PC-9 (cell line): ENCODE measurements at regions of chr4 and their contacts with region 1.

Region 1: DNA sequence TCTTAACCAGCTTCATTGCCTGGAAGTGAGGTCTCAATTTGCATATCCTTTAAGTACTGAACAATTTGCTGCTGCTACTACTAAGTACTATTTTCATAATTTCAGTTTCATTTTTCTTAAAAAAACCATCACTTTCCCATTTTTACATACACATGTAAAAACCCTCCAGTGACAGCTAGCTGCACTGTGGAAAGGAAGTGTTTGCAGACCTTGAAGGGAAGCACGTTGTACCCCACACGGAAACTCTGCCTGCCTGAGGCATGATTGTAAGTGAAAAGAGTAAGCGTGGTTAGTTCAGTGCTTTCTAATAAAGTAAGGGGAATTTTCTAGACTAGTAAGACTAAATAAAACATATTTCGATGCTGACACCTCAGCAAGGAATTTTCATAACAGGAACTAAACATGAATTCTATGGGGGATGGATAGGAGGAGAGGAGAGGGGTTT is 103.6 kb downstream of the RAPGEF2 start:
- DNase-seq: no peak
- H3K4me3 ChIP-seq: no peak overlapping the region
- H3K27ac ChIP-seq: no peak overlapping the region
- H3K4me1 ChIP-seq: no peaks in the 10 kb centered on the region
- H3K27me3 ChIP-seq: no peaks in the 10 kb centered on the region
- CTCF ChIP-seq: no peak

Region 2: DNA sequence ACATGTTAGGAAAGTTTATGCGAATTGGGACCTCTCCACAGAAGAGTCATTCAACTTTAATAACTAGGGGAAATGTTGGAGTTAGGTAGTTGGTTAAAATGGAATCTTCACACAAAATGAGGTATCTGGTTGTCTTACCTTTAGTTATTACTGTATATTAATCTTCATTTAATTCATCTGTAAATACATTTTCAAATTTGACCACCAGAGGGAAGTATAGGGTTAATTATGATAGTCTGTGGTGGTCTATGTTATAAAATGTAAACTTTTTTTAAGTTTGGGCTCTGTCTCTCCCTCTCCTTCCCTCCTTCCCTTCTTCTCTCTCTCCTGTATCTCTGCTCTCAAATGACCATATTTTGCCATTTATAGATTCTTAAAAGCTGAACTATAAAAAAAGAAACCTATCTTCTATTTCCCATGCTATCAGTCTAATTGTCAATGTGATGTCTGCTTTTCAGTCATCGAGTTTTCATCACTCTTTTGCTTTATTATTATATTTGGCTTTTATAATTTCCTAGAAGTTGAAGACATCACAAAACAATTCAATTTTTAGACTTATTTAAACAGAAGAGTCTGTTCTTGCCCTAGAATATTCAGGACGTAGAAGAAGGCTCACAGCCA is 946.4 kb before region 1 on chr4:
- CTCF ChIA-PET with region 1: no interaction called
- POLR2A ChIA-PET with region 1: no interaction called
- intact Hi-C with region 1: loop called (anchors 1 kb)
- DNase-seq: no peak
- H3K4me3 ChIP-seq: no peak overlapping the region
- H3K27ac ChIP-seq: no peak overlapping the region
- H3K4me1 ChIP-seq: no peaks in the 10 kb centered on the region
- H3K27me3 ChIP-seq: no peaks in the 10 kb centered on the region
- CTCF ChIP-seq: peak; percentile 70

Region 3: GRCh38 chr4:158410272-158410671 is 796.2 kb before region 1 on chr4:
- CTCF ChIA-PET with region 1: no interaction called
- POLR2A ChIA-PET with region 1: no interaction called
- intact Hi-C with region 1: loop called (anchors 10 kb)
- DNase-seq: no peak
- H3K4me3 ChIP-seq: no peak overlapping the region
- H3K27ac ChIP-seq: no peak overlapping the region
- H3K4me1 ChIP-seq: no peaks in the 10 kb centered on the region
- H3K27me3 ChIP-seq: no peaks in the 10 kb centered on the region
- CTCF ChIP-seq: 0 out of 2 replicates have a peak, but pooled peaks have one; percentile 22

Region 4: DNA sequence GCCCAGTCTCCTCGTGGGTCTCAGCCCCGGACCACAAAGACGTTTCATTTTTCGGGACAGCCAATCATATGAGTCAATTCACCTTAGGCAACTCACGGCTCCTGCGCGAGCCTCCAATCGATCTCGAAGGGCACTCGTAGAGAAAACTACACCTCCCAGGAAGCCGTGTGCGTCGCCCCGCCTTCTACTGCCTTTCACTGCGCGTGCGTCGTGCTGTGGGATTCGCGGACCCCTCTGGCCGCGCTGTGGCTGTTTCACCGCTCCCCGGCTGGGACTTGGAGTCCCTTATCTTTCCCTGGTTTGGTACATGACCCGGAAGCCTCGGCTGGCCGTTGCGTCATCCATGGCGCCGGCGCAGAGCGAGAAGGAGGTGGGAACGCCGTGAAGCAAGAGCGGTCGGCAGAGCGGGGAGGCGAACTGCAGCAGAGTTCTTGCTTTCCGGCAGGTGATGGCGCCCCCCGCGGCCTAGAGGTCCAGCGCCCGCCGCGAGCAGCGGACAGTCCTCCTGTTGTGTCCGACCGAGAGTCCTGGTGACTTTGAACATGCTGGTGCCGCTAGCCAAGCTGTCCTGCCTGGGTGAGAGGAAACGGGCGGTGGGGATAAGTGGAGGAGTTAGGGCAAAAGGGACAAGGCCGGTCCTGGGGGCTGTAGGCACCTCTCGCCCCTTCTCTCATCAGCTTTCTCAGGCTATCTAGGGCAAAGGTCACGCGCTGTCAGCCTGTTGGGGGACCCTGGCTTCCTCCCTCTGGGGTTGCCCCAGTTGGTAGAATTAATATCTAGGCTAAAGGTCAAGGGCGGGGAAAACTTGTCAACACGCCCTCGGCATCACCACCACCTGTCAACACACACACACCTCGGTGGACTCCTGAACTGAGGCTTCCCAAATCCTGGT is 534.3 kb before region 1 on chr4 and contains the start of gene ETFDH:
- CTCF ChIA-PET with region 1: no interaction called
- POLR2A ChIA-PET with region 1: no interaction called
- intact Hi-C with region 1: loop called (anchors 1 kb)
- DNase-seq: peak; percentile 95 to 98
- H3K4me3 ChIP-seq: peak within 1 kb of the TSS; percentile 83
- H3K27ac ChIP-seq: peak within 1 kb of the TSS; percentile 74
- H3K4me1 ChIP-seq: peaks cover 8% of the 10 kb centered on the region
- H3K27me3 ChIP-seq: no peaks in the 10 kb centered on the region
- CTCF ChIP-seq: peak; percentile 63
- total RNA-seq, gene ETFDH: 16.9 and 21.0 TPM in 2 replicates

Region 5: DNA sequence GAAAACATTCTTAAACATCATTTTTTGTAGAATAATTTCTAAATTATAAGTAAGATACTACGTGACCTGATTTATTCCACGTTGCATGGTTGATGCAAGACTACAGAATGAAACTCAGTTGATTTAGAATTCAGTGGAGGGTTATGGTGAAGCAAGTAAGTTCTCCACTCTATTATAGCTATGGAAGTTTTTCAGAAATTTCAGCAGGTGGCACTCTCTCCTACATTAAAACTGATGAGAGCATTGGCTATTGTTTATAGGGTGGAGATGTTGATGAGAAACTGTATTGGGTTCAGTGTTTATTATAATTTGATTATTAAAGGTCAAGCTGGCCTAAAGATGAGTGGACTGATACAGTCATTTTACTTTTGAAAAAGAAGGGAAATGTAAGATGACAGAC is 349.6 kb before region 1 on chr4:
- CTCF ChIA-PET with region 1: interaction called, 3 read pairs
- POLR2A ChIA-PET with region 1: interaction called, 5 read pairs
- intact Hi-C with region 1: loop called (anchors 1 kb)
- DNase-seq: peak in 1 of 2 experiments; percentile 52
- H3K4me3 ChIP-seq: no peak overlapping the region
- H3K27ac ChIP-seq: no peak overlapping the region
- H3K4me1 ChIP-seq: no peaks in the 10 kb centered on the region
- H3K27me3 ChIP-seq: no peaks in the 10 kb centered on the region
- CTCF ChIP-seq: peak; percentile 73

Region 6: DNA sequence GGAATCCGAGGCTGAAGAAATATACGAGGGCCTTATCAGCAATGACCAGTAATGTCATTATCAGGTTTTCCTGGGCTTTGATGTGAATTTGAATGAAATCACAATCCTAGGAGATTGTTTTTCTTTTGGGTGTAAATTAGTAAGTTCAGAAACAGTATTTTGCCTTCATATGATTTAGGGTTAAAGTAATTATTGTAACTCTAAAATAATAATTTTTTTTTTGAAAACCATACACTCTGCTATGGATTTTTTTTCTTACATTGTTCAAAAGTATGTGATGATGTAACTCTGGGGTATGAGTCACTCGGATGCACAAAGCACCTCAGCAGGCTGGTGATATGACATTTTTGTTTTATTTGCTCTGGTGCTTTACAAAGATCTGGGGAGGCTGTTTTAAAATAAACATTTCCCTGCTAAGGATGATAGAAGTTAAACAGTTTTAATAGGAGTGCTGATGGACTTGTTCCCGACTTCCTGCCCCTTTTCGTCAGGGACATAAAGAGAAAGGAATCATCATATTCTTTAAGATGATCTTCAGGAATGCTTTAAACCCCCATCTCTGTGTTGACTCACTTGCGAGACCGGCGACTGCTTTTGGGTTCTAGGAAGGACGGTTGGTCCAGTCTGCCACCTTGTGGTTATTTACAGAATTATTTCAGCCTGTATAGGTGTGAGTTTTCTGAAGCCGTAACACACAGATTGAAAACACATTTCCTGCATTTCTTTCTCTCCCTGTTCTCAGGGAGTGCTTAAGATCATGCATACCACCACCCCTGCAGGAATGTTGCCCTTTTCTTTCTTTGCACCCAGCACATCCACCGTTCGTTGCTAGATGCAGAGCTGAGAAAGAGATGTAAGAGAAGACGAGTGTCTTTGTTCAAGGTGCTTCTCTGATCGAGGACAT is 31.1 kb before region 1 on chr4:
- CTCF ChIA-PET with region 1: no interaction called
- POLR2A ChIA-PET with region 1: no interaction called
- intact Hi-C with region 1: no loop called
- DNase-seq: peak; percentile 64 to 81
- H3K4me3 ChIP-seq: peak overlapping the region; percentile 38; the same call in 1 of the 2 replicates
- H3K27ac ChIP-seq: peak overlapping the region; percentile 74
- H3K4me1 ChIP-seq: peaks cover 17% of the 10 kb centered on the region
- H3K27me3 ChIP-seq: no peaks in the 10 kb centered on the region
- CTCF ChIP-seq: peak; percentile 87

Region 7: GRCh38 chr4:159446266-159446976 is 240.0 kb after region 1 on chr4:
- CTCF ChIA-PET with region 1: no interaction called
- POLR2A ChIA-PET with region 1: no interaction called
- intact Hi-C with region 1: loop called (anchors 2 kb)
- DNase-seq: peak; percentile 39 to 49
- H3K4me3 ChIP-seq: no peak overlapping the region
- H3K27ac ChIP-seq: no peak overlapping the region
- H3K4me1 ChIP-seq: no peaks in the 10 kb centered on the region
- H3K27me3 ChIP-seq: no peaks in the 10 kb centered on the region
- CTCF ChIP-seq: peak; percentile 82

Region 8: DNA sequence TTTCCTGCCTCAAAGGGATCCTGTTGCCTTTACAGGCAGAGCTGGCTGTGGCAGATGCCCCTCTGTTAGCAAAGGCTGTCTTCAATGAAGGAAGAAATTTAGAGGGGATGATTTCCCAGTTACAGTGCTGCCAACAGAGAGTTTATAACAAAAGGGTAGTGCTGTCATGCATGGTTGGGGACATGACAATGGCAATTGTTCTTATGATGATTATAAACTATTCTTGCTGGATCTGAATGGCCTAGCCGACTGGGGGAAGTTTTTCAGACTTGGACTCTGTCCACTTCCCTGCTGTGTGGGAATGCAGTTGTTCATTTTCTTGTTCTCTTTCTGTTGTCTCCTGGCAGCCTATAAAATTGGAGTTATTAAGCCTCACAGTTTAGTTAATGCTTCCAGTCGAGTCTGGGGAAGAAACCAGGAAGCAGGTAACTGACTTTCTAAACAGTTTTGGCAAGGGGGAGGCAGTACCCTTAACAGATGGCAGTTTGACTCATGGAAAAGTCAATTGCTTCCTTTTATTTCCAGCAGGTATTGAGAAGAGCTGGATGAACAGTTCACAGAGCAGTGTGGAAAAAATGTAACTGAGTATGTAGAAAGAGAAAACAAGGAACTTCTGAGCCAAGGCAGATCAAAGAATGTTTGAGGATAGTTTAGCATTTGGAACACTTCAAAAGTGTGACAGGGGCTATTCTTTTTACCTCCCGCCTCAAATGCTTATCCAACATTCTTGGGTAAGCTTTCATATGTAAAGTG is 479.1 kb after region 1 on chr4:
- CTCF ChIA-PET with region 1: no interaction called
- POLR2A ChIA-PET with region 1: no interaction called
- intact Hi-C with region 1: no loop called
- DNase-seq: no peak
- H3K4me3 ChIP-seq: no peak overlapping the region
- H3K27ac ChIP-seq: no peak overlapping the region
- H3K4me1 ChIP-seq: no peaks in the 10 kb centered on the region
- H3K27me3 ChIP-seq: no peaks in the 10 kb centered on the region
- CTCF ChIP-seq: no peak